ENCODE measurements at regions of chr14 and their contacts with region 1.

Region 1: DNA sequence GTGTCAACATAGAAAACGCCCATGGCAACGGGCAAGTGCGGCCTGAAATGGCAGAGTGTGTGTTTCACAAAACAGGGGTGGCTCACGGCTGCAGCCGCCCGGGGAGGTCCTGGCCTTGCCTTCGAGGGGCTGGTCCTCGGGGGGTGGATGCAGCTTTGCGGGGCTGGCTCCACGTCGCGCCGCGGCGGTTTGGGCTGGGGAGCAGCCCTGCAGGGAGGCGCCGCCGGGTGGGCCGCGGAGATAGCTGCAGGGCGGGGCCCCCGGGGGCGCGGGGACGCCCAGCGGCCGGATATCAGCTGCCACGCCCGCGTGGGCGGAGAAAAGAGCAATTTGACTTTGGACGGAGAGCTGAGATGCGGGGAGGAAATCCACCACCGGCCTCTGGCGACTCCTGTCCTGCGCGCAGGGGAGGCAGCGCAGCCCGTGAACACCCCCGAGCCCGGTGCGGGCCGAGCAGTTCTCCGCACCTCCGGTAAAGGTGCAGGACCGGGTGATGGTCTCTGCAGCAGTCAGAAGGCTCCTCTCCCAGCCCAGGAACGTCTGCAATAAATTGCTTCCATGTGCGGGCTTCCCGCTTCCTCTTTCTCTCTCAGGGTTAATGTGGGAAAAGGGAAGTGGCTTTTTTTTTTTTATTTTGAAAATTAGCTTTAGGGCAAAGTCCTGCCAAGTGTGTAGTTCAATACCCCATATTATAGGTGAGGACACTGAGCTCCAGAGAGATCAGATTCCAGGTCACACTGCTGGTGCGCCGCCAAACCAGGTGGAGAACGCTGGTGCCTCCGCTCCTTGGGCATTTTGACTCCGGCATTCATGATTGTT is 110.5 kb downstream of the ARF6 start:
- DNase-seq: peak; percentile 57 to 92 (median 77)
- ATAC-seq: peak; percentile 14
- H3K4me3 ChIP-seq: peak overlapping the region; percentile 44 to 56
- H3K4me3 Mint-ChIP-seq: peak overlapping the region; percentile 90
- H3K27ac ChIP-seq: peak overlapping the region; percentile 93 to 96
- H3K27ac Mint-ChIP-seq: peak overlapping the region; percentile 97
- H3K4me1 ChIP-seq: peaks cover 51% of the 10 kb centered on the region
- H3K4me1 Mint-ChIP-seq: peaks cover 56% of the 10 kb centered on the region
- H3K27me3 ChIP-seq: no peaks in the 10 kb centered on the region
- H3K27me3 Mint-ChIP-seq: no peaks in the 10 kb centered on the region
- CTCF ChIP-seq: peak; percentile 35

Region 2: GRCh38 chr14:49862089-49862673 is 141.2 kb before region 1 on chr14:
- CTCF ChIA-PET with region 1: interaction called, 134 read pairs
- POLR2A ChIA-PET with region 1: interaction called, 73 read pairs
- intact Hi-C with region 1: loop called in 1 of 2 experiments (anchors 2 kb)
- DNase-seq: peak; percentile 78 to 93 (median 85)
- ATAC-seq: peak; percentile 32
- H3K4me3 ChIP-seq: peak overlapping the region; percentile 66 to 80
- H3K4me3 Mint-ChIP-seq: no peak overlapping the region
- H3K27ac ChIP-seq: peak overlapping the region; percentile 97 to 98
- H3K27ac Mint-ChIP-seq: no peak overlapping the region
- H3K4me1 ChIP-seq: peaks cover 28% of the 10 kb centered on the region
- H3K4me1 Mint-ChIP-seq: peaks cover 7% of the 10 kb centered on the region
- H3K27me3 ChIP-seq: no peaks in the 10 kb centered on the region
- H3K27me3 Mint-ChIP-seq: no peaks in the 10 kb centered on the region
- CTCF ChIP-seq: peak; percentile 100

Region 3: GRCh38 chr14:49946320-49947141 is 56.9 kb before region 1 on chr14:
- CTCF ChIA-PET with region 1: interaction called, 7 read pairs
- POLR2A ChIA-PET with region 1: interaction called, 10 read pairs
- intact Hi-C with region 1: loop called in 1 of 2 experiments (anchors 2 kb)
- DNase-seq: peak in 3 of 9 experiments; percentile 19 to 45 (median 20)
- ATAC-seq: peak; percentile 56
- H3K4me3 ChIP-seq: no peak overlapping the region
- H3K4me3 Mint-ChIP-seq: peak overlapping the region; percentile 66
- H3K27ac ChIP-seq: peak overlapping the region; percentile 49 to 84
- H3K27ac Mint-ChIP-seq: peak overlapping the region; percentile 95
- H3K4me1 ChIP-seq: peaks cover 50% of the 10 kb centered on the region
- H3K4me1 Mint-ChIP-seq: peaks cover 63% of the 10 kb centered on the region
- H3K27me3 ChIP-seq: no peaks in the 10 kb centered on the region
- H3K27me3 Mint-ChIP-seq: no peaks in the 10 kb centered on the region
- CTCF ChIP-seq: no peak

Region 4: DNA sequence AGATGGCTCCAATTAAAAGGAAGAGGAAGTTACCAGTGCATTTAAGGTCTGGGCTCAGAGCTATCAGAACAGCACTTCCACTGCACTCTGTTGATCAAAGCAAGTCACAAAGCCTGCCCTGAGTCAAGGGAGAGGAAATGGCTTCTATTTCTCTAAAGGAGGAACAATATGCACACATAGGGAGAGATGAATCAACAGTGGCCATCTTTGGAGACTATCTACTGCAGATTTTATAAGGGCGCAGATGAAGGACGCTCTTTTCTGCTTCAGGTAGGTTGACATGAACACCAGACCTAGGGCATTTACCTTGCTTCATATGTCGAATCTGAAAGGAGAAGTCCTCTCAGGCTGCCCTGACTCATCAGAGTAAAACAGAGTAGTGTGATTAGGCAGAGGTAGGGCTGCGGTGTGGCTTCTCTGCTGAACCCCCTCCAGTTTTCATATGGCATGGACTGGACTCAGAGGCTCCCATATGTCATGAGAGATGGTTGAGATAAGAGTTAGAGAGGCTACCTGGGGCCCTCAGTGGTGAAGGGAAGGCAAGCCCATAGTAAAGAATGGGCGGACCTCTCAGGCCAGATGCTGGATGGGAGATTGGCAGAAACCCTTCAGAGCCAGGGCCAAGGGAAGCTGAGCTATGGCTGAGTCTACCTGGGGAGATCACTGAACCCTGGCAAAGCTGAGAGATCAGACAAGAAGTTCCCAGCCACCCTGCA is 26.1 kb before region 1 on chr14:
- CTCF ChIA-PET with region 1: interaction called, 23 read pairs
- POLR2A ChIA-PET with region 1: interaction called, 37 read pairs
- intact Hi-C with region 1: loop called (anchors 1 kb)
- DNase-seq: peak in 6 of 9 experiments; percentile 24 to 65 (median 36)
- ATAC-seq: peak; percentile 79
- H3K4me3 ChIP-seq: peak overlapping the region in 1 of 2 experiments; percentile 24
- H3K4me3 Mint-ChIP-seq: peak overlapping the region; percentile 60
- H3K27ac ChIP-seq: peak overlapping the region; percentile 34 to 61
- H3K27ac Mint-ChIP-seq: peak overlapping the region; percentile 94
- H3K4me1 ChIP-seq: peaks cover 65% of the 10 kb centered on the region
- H3K4me1 Mint-ChIP-seq: peaks cover 84% of the 10 kb centered on the region
- H3K27me3 ChIP-seq: no peaks in the 10 kb centered on the region
- H3K27me3 Mint-ChIP-seq: no peaks in the 10 kb centered on the region
- CTCF ChIP-seq: no peak

Region 5: DNA sequence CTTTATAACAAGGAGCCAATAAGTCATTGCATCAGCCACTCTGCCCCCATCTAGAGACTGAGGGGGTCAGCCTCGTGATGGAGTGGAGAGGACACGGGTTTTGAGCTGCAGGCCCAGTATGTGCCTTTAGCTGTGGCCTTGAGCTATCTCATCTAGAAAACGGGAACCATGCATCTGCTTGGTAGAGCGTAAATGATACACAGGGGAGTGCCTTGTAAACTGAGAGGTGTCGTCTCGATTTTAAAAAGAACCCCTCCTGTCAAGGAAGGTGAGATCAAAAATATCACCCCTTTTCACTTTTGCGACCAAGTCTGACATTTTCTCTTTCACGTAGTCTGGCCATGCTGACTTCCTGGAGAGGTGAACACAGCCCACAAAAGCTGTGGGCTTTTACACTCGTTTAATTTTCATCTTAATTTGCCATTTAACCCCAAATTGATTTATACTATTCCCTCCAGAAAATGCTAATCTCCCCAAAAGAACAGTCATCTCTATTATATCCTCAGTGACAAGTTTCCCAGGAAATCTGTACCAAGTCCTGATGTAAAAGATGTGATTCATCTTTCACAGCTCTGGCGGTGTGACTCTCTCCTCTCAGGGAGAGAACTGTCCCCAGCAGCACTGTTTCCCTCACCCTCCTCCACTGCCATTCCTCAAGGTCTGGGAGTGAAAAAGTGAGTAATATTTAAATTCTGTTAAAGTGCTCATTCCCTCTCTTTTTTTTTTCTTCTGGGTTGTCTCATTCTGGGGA is 82.3 kb after region 1 on chr14:
- CTCF ChIA-PET with region 1: interaction called, 5 read pairs
- POLR2A ChIA-PET with region 1: interaction called, 31 read pairs
- intact Hi-C with region 1: loop called (anchors 1 to 5 kb)
- DNase-seq: peak in 3 of 9 experiments; percentile 28 to 81 (median 65)
- ATAC-seq: peak; percentile 2
- H3K4me3 ChIP-seq: peak overlapping the region in 1 of 2 experiments; percentile 16
- H3K4me3 Mint-ChIP-seq: peak overlapping the region; percentile 66
- H3K27ac ChIP-seq: peak overlapping the region; percentile 50 to 98
- H3K27ac Mint-ChIP-seq: peak overlapping the region; percentile 92
- H3K4me1 ChIP-seq: peaks cover 86% of the 10 kb centered on the region
- H3K4me1 Mint-ChIP-seq: peaks cover 94% of the 10 kb centered on the region
- H3K27me3 ChIP-seq: no peaks in the 10 kb centered on the region
- H3K27me3 Mint-ChIP-seq: no peaks in the 10 kb centered on the region
- CTCF ChIP-seq: no peak